Pancreas (tissue), 10 donors: ENCODE measurements at regions of chr3 and their contacts with region 1.

Region 1: GRCh38 chr3:188954590-188955208 is 217.1 kb upstream of the TPRG1 start:
- DNase-seq: peak; percentile 76 to 87 (median 84)
- ATAC-seq: peak; percentile 51 to 85 (median 80)
- H3K4me3 ChIP-seq: no peak overlapping the region
- H3K27ac ChIP-seq: no peak overlapping the region
- H3K4me1 ChIP-seq: peaks cover 17 to 23% (median 22%) of the 10 kb centered on the region in 3 donors
- H3K27me3 ChIP-seq: no peaks in the 10 kb centered on the region
- CTCF ChIP-seq: peak; percentile 81 to 96 (median 84)

Region 2: DNA sequence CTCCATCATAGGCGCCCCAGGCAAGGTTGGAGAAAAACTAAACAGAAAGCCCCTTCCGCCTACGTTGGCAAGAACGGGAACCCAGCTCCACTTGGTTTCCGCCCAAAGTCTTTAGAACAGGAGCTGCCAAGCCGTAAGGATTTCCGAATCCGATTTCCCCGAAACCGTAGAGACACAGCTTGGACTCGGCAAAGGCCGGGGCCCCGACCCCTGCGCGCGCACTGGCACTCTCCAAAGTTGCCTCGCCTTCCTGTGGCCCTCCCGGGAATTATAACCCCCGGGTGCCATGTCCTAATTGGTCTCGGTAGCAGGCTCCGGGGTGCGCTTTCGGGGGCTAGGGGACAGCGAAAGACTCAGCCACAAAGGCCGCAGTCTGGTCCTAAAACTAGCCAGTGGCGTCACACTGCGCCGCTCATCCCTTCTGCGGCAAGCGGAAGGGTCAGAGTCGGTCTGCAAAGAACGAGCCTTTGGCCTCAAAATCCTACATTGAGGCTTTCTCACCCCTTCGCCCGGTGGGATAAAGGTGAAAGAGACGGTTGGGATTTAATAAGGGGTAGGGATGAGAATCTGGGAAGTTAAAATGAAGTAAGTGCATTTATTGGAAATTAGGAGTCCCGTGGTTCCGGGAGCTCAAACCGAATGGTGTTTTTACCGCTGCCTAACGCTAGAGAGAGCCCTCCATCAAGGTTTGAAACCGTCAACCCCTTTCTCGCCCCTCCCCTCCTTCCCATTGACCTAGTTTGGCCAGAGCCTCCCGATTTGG is 1216.2 kb before region 1 on chr3:
- intact Hi-C with region 1: loop called in 2 of 3 experiments (anchors 5 kb)
- DNase-seq: peak; percentile 71 to 93 (median 85)
- ATAC-seq: peak; percentile 66 to 77 (median 70)
- H3K4me3 ChIP-seq: peak overlapping the region; percentile 3 to 80 (median 50)
- H3K27ac ChIP-seq: peak overlapping the region; percentile 65 to 99 (median 86)
- H3K4me1 ChIP-seq: peaks cover 4 to 14% (median 7%) of the 10 kb centered on the region in 3 donors
- H3K27me3 ChIP-seq: no peaks in the 10 kb centered on the region
- CTCF ChIP-seq: peak; percentile 19 to 55 (median 37)

Region 3: GRCh38 chr3:188154809-188155574 is 799.7 kb before region 1 on chr3:
- intact Hi-C with region 1: loop called in 1 of 3 experiments (anchors 5 kb)
- DNase-seq: no peak
- ATAC-seq: no peak
- H3K4me3 ChIP-seq: peak overlapping the region; percentile 70 to 84 (median 78)
- H3K27ac ChIP-seq: peak overlapping the region; percentile 79 to 96 (median 91)
- H3K4me1 ChIP-seq: peaks cover 17 to 41% (median 27%) of the 10 kb centered on the region in 3 donors
- H3K27me3 ChIP-seq: no peaks in the 10 kb centered on the region
- CTCF ChIP-seq: no peak